ENCODE measurements at regions of chr1 and their contacts with region 1.

Region 1: DNA sequence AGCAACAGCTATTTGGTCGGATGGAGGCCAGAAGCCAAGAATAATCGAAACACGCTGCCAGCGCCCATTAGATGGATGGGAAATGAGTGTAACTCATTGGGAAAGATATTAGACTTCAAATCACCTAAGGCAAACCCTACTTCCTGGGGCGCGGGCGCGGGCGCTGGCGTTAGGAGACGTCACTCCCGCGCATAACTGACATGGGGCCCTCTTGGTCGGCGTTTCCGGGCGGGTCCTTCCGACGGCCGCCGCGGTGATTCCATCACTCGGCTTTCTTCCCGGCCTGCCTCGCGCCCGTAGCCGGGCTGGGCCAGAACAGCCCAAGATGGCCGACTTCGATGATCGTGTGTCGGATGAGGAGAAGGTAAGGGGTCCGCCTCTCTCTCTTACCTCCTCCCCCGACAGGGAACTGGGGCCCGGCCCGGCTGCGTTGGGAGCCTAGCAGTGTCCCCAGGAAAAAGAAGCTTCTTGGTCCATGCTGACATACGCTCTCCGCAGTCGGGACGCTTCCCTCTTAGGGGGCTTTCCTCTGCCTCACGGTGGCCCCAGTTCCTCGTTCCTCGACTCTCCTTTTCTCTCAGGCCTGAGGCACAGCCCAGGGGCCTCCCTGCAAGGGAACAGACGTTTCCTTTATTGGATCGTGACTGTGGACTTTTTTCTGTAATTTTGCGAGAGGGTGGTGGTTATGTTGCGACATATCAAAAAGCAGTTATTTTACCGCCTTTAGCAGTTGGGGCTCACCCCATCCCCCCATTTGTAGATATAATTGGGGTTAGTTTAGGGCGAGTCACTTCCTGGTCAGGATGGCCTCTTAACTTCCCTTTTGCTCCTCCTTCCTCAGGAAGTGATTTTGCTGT is at the start of gene CAPZA1:
- DNase-seq: peak; percentile 83 to 93 (median 91)
- ATAC-seq: peak; percentile 89
- H3K4me3 ChIP-seq: peak within 1 kb of the TSS; percentile 93
- H3K4me3 Mint-ChIP-seq: peak within 1 kb of the TSS; percentile 98 to 100 (median 99)
- H3K27ac ChIP-seq: peak within 1 kb of the TSS; percentile 100
- H3K27ac Mint-ChIP-seq: peak within 1 kb of the TSS; percentile 99 to 100 (median 100)
- H3K4me1 ChIP-seq: peaks cover 19 to 21% of the 10 kb centered on the region in 2 donors
- H3K4me1 Mint-ChIP-seq: peaks cover 27 to 55% (median 46%) of the 10 kb centered on the region in 7 donors
- H3K27me3 ChIP-seq: no peaks in the 10 kb centered on the region
- H3K27me3 Mint-ChIP-seq: peaks cover 0 to 1% (median 0%) of the 10 kb centered on the region in 5 donors
- total RNA-seq, gene CAPZA1: 114 to 237 (median 143) TPM

Region 2: DNA sequence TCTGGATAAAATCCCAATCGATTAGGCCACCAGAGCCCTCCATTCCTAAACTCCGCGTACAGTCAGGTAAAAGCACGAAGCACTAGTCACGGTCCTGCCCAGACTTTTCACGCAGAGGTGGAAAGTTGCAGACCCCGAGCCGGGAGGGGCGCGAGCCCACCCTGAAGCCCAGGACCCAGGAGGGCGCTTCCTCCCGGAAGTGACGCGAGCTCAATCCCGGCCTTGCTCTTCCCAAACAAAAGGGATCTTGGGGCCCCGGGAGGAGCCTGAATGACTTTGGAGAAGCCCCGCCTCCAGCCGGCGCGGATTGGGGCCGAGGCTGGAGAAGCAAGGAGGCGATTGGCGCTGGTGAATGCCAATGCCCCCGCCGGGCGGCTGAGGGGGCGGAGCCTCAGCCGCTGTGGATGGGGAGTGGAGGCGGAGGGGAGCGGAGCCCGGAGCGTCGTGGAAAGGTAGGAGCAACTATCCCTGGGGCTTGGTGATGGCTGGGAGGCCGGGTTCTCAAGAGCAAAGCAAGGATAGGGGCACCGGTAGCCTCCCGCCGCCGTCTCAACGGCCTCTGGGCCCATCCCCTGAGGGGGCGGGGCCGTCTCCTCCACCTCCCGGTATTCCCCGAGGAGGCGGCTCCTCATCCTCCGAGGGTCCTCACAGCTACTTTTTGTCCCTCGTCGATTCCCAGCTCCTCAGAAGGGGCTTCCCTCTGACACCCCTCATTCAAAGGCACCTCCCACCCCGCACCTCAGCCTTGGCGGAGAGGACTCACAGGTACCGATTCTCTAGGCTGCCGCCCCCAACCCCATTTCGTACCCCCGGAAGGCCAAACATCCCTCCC is 223.7 kb before region 1 on chr1 and contains the start of gene CTTNBP2NL:
- CTCF ChIA-PET with region 1: interaction called, 4 read pairs
- POLR2A ChIA-PET with region 1: interaction called, 4 read pairs
- intact Hi-C with region 1: loop called in 1 of 2 experiments (anchors 1 kb)
- DNase-seq: peak; percentile 40 to 83 (median 67)
- ATAC-seq: peak; percentile 95
- H3K4me3 ChIP-seq: peak within 1 kb of the TSS; percentile 91
- H3K4me3 Mint-ChIP-seq: peak within 1 kb of the TSS; percentile 80 to 95 (median 92)
- H3K27ac ChIP-seq: peak within 1 kb of the TSS; percentile 32
- H3K27ac Mint-ChIP-seq: peak within 1 kb of the TSS in 8 of 9 donors; percentile 6 to 88 (median 60)
- H3K4me1 ChIP-seq: peaks cover 7 to 14% of the 10 kb centered on the region in 2 donors
- H3K4me1 Mint-ChIP-seq: peaks cover 13 to 37% (median 20%) of the 10 kb centered on the region in 7 donors
- H3K27me3 ChIP-seq: peaks cover 0 to 3% of the 10 kb centered on the region in 2 donors
- H3K27me3 Mint-ChIP-seq: peaks cover 13 to 26% (median 18%) of the 10 kb centered on the region in 5 donors
- total RNA-seq, gene CTTNBP2NL: 0.32 to 1.8 (median 0.90) TPM

Region 3: DNA sequence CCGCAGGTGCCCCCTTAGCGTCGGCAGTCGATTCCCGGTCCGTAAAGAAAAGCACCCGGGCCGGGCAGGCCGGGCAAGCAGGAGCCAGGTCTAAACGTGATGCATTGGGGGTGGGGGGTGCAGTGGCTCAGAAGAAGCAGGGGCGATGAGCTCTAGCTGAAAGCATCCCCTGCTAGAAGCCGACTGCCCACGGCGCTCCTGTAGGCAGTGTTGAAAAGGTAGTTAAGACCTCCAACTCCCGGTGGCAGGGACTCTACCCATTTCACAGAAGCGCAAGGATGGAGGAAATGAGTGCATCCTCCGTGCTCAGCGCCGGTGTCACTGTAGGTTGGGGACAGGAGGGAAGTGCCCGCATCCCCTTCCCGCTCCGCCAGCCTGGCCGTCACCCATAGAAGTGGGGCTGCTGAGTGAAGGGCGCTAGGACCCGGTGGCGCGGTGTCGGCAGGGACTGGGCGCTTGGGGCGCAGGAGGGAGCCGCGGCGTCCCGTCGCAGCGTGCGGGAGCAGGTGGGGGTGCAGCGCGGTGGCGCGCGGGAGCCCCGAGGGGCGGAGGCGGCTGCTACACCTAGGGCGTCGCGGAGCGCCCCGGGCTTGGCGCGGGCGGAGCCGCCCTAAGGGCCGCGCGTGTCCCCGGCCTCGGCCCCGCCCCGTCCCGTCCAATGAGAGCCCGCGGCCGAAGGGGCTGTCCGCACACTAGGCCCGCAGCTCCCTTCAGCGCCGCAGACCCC is 111.3 kb before region 1 on chr1 and contains the start of gene WNT2B:
- CTCF ChIA-PET with region 1: no interaction called
- POLR2A ChIA-PET with region 1: interaction called, 6 read pairs
- intact Hi-C with region 1: loop called in 1 of 2 experiments (anchors 2 kb)
- DNase-seq: peak; percentile 37 to 60 (median 52)
- ATAC-seq: peak; percentile 85
- H3K4me3 ChIP-seq: peak within 1 kb of the TSS; percentile 57
- H3K4me3 Mint-ChIP-seq: peak within 1 kb of the TSS; percentile 74 to 90 (median 82)
- H3K27ac ChIP-seq: no peak within 1 kb of the TSS
- H3K27ac Mint-ChIP-seq: peak within 1 kb of the TSS in 1 of 9 donors; percentile 25
- H3K4me1 ChIP-seq: peaks cover 10 to 12% of the 10 kb centered on the region in 2 donors
- H3K4me1 Mint-ChIP-seq: peaks cover 3 to 16% (median 9%) of the 10 kb centered on the region in 7 donors
- H3K27me3 ChIP-seq: peaks cover 0 to under 1% of the 10 kb centered on the region in 2 donors
- H3K27me3 Mint-ChIP-seq: peaks cover 17 to 63% (median 23%) of the 10 kb centered on the region in 5 donors
- total RNA-seq, gene WNT2B: 0.38 to 0.94 (median 0.61) TPM in 4 of 5 experiments, not detected in the other

Region 4: GRCh38 chr1:112557385-112557784 is 62.4 kb before region 1 on chr1:
- CTCF ChIA-PET with region 1: no interaction called
- POLR2A ChIA-PET with region 1: no interaction called
- intact Hi-C with region 1: no loop called
- DNase-seq: no peak
- ATAC-seq: no peak
- H3K4me3 ChIP-seq: no peak overlapping the region
- H3K4me3 Mint-ChIP-seq: no peak overlapping the region
- H3K27ac ChIP-seq: no peak overlapping the region
- H3K27ac Mint-ChIP-seq: no peak overlapping the region
- H3K4me1 ChIP-seq: no peaks in the 10 kb centered on the region
- H3K4me1 Mint-ChIP-seq: peaks cover 0 to 5% (median 0%) of the 10 kb centered on the region in 7 donors
- H3K27me3 ChIP-seq: no peaks in the 10 kb centered on the region
- H3K27me3 Mint-ChIP-seq: no peaks in the 10 kb centered on the region

Region 5: GRCh38 chr1:112646225-112646624 is 26.5 kb after region 1 on chr1:
- CTCF ChIA-PET with region 1: no interaction called
- POLR2A ChIA-PET with region 1: interaction called, 6 read pairs
- intact Hi-C with region 1: loop called in 1 of 2 experiments (anchors 2 kb)
- DNase-seq: no peak
- ATAC-seq: no peak
- H3K4me3 ChIP-seq: no peak overlapping the region
- H3K4me3 Mint-ChIP-seq: no peak overlapping the region
- H3K27ac ChIP-seq: no peak overlapping the region
- H3K27ac Mint-ChIP-seq: peak overlapping the region in 7 of 9 donors; percentile 4 to 71 (median 36)
- H3K4me1 ChIP-seq: peaks cover 0 to 8% of the 10 kb centered on the region in 2 donors
- H3K4me1 Mint-ChIP-seq: peaks cover 15 to 65% (median 37%) of the 10 kb centered on the region in 7 donors
- H3K27me3 ChIP-seq: no peaks in the 10 kb centered on the region
- H3K27me3 Mint-ChIP-seq: no peaks in the 10 kb centered on the region

Region 6: DNA sequence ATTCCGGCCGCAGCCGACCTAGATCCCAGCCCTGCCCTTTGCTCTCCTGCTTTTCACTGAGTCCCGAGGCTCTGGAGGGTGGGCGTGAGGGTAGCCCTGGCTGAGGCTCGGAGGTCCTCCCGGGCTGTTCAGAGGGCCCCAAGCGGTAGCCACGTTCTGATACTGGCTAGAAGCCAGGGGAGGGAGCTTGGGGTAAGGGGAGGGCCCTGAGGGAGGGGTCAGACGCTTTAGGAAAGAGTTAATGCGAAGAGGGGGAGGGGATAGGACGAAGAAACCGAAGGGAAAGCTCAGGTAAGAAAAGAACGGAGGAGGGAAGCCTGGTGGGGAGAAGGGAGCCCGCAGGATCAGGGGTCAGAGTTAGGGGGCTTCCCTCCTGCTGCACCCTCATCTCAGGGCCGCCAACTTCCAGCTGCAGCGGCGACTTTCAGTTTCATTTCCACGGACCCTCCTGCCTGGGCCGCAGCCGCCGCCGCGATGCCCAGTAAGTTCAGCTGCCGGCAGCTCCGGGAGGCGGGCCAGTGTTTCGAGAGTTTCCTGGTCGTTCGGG is 54.8 kb after region 1 on chr1 and contains the start of gene MOV10:
- CTCF ChIA-PET with region 1: interaction called, 6 read pairs
- POLR2A ChIA-PET with region 1: interaction called, 76 read pairs
- intact Hi-C with region 1: loop called (anchors 1 kb)
- DNase-seq: peak; percentile 38 to 62 (median 59)
- ATAC-seq: peak; percentile 73
- H3K4me3 ChIP-seq: peak within 1 kb of the TSS; percentile 92
- H3K4me3 Mint-ChIP-seq: peak within 1 kb of the TSS; percentile 94 to 99 (median 97)
- H3K27ac ChIP-seq: peak within 1 kb of the TSS; percentile 88
- H3K27ac Mint-ChIP-seq: peak within 1 kb of the TSS; percentile 90 to 98 (median 95)
- H3K4me1 ChIP-seq: peaks cover 17 to 19% of the 10 kb centered on the region in 2 donors
- H3K4me1 Mint-ChIP-seq: peaks cover 37 to 62% (median 58%) of the 10 kb centered on the region in 7 donors
- H3K27me3 ChIP-seq: no peaks in the 10 kb centered on the region
- H3K27me3 Mint-ChIP-seq: no peaks in the 10 kb centered on the region
- total RNA-seq, gene MOV10: 85.5 to 126 (median 90.1) TPM

Region 7: DNA sequence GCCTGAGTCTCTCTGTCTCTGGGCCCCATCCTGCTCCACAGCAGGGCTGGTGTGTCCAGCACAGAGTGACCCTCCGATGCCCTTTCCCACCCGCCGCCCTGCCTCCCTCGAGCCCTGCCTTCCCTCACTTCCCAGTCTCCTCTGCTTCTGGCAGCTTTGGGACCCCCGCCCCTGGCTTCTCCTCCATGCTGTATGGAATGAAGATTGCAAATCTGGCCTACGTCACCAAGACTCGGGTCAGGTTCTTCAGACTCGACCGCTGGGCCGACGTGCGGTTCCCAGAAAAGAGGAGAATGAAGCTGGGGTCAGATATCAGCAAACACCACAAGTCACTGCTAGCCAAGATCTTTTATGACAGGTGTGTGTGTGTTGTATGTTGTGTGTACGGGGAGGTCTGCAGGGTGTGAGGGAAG is 69.0 kb after region 1 on chr1:
- CTCF ChIA-PET with region 1: no interaction called
- POLR2A ChIA-PET with region 1: no interaction called
- intact Hi-C with region 1: no loop called
- DNase-seq: no peak
- ATAC-seq: no peak
- H3K4me3 ChIP-seq: no peak overlapping the region
- H3K4me3 Mint-ChIP-seq: no peak overlapping the region
- H3K27ac ChIP-seq: no peak overlapping the region
- H3K27ac Mint-ChIP-seq: peak overlapping the region in 1 of 9 donors; percentile 66
- H3K4me1 ChIP-seq: no peaks in the 10 kb centered on the region
- H3K4me1 Mint-ChIP-seq: peaks cover 4 to 12% (median 10%) of the 10 kb centered on the region in 7 donors
- H3K27me3 ChIP-seq: no peaks in the 10 kb centered on the region
- H3K27me3 Mint-ChIP-seq: no peaks in the 10 kb centered on the region

Region 8: GRCh38 chr1:112706908-112707663 is 87.3 kb after region 1 on chr1 and contains the start of gene RHOC:
- CTCF ChIA-PET with region 1: interaction called, 3 read pairs
- POLR2A ChIA-PET with region 1: interaction called, 4 read pairs
- intact Hi-C with region 1: loop called (anchors 1 kb)
- DNase-seq: peak in 6 of 9 donors; percentile 27 to 79 (median 44)
- ATAC-seq: peak; percentile 75
- H3K4me3 ChIP-seq: peak within 1 kb of the TSS; percentile 41
- H3K4me3 Mint-ChIP-seq: peak within 1 kb of the TSS; percentile 74 to 90 (median 83)
- H3K27ac ChIP-seq: no peak within 1 kb of the TSS
- H3K27ac Mint-ChIP-seq: peak within 1 kb of the TSS; percentile 13 to 87 (median 73)
- H3K4me1 ChIP-seq: peaks cover 22% of the 10 kb centered on the region in 2 donors
- H3K4me1 Mint-ChIP-seq: peaks cover 15 to 52% (median 45%) of the 10 kb centered on the region in 7 donors
- H3K27me3 ChIP-seq: no peaks in the 10 kb centered on the region
- H3K27me3 Mint-ChIP-seq: peaks cover 0 to 27% (median 0%) of the 10 kb centered on the region in 5 donors
- total RNA-seq, gene RHOC: 0.57 to 89.1 (median 18.7) TPM

Region 9: GRCh38 chr1:112887599-112888283 is 268.0 kb after region 1 on chr1:
- CTCF ChIA-PET with region 1: no interaction called
- POLR2A ChIA-PET with region 1: no interaction called
- intact Hi-C with region 1: no loop called
- DNase-seq: no peak
- ATAC-seq: no peak
- H3K4me3 ChIP-seq: no peak overlapping the region
- H3K4me3 Mint-ChIP-seq: no peak overlapping the region
- H3K27ac ChIP-seq: no peak overlapping the region
- H3K27ac Mint-ChIP-seq: no peak overlapping the region
- H3K4me1 ChIP-seq: no peaks in the 10 kb centered on the region
- H3K4me1 Mint-ChIP-seq: no peaks in the 10 kb centered on the region
- H3K27me3 ChIP-seq: no peaks in the 10 kb centered on the region
- H3K27me3 Mint-ChIP-seq: no peaks in the 10 kb centered on the region

Region 10: DNA sequence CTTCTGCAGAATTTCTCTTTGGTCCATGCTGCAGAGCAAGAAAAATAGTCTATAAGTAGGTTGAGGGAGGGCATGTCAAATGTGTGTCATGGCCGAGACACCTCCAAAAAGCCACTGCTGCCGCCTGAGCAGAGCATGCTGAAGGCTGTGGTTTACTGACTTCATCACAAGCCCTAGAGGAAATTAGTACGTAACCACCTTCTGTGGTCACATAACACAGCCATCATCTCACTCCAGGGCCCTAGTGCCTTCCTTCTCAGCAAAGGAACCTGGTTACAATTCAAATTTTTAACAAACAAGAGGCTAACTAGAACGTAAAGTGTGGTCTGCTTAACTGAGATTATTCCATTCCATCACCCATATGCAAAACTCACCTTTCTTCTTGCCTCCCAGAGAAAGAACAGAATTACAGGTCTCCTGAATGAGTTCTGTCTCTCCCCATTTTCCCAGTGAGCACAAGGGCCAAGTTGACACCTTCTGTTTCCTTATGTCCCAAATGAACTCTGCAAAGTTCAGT is 1251.9 kb after region 1 on chr1 and contains the start of gene PTPN22:
- CTCF ChIA-PET with region 1: no interaction called
- POLR2A ChIA-PET with region 1: no interaction called
- intact Hi-C with region 1: loop called (anchors 2 kb)
- DNase-seq: peak; percentile 41 to 91 (median 87)
- ATAC-seq: peak; percentile 98
- H3K4me3 ChIP-seq: peak within 1 kb of the TSS; percentile 81
- H3K4me3 Mint-ChIP-seq: peak within 1 kb of the TSS; percentile 82 to 95 (median 92)
- H3K27ac ChIP-seq: peak within 1 kb of the TSS; percentile 87
- H3K27ac Mint-ChIP-seq: peak within 1 kb of the TSS; percentile 94 to 99 (median 98)
- H3K4me1 ChIP-seq: peaks cover 30 to 65% of the 10 kb centered on the region in 2 donors
- H3K4me1 Mint-ChIP-seq: peaks cover 37 to 77% (median 72%) of the 10 kb centered on the region in 7 donors
- H3K27me3 ChIP-seq: no peaks in the 10 kb centered on the region
- H3K27me3 Mint-ChIP-seq: no peaks in the 10 kb centered on the region
- total RNA-seq, gene PTPN22: 22.2 to 76.7 (median 27.5) TPM